ENCODE measurements at regions of chr9 and their contacts with region 1.

Region 1: GRCh38 chr9:19934301-19934868 is 145.5 kb upstream of the SLC24A2 start:
- DNase-seq: peak; percentile 26 to 34
- ATAC-seq: peak; percentile 38 to 75 (median 66)
- H3K4me3 ChIP-seq: peak overlapping the region; percentile 15 to 67 (median 56)
- H3K27ac ChIP-seq: peak overlapping the region in 3 of 10 donors; percentile 37 to 62 (median 37)
- H3K4me1 ChIP-seq: peaks cover 0 to 12% (median 0%) of the 10 kb centered on the region in 9 donors
- H3K27me3 ChIP-seq: peaks cover 0 to 8% (median 0%) of the 10 kb centered on the region in 7 donors
- CTCF ChIP-seq: peak in 3 of 9 donors; percentile 14 to 17 (median 16)

Region 2: DNA sequence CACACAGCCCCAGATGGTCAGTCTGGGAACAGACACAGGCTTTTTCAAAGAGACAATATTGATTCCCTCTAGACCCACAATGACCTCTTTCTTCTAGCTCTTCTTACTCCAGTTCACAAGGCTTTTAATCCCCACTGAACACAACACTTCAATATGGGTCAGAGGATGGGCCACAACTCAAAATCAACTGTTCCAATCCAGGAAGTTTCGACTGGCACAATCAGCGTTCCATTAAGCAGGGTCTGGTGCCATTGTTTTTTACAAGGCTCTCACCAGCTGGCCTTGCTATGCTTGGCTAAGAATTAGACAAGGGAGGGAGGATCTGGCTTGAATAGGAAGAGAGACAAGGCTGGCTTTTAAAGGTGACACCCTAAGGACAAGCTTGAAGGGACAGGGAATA is 53.9 kb after region 1 on chr9:
- intact Hi-C with region 1: no loop called
- DNase-seq: no peak
- ATAC-seq: no peak
- H3K4me3 ChIP-seq: no peak overlapping the region
- H3K27ac ChIP-seq: no peak overlapping the region
- H3K4me1 ChIP-seq: no peaks in the 10 kb centered on the region
- H3K27me3 ChIP-seq: no peaks in the 10 kb centered on the region
- CTCF ChIP-seq: no peak

Region 3: GRCh38 chr9:20015427-20015931 is 81.1 kb after region 1 on chr9:
- intact Hi-C with region 1: loop called in 1 of 10 experiments (anchors 10 kb)
- DNase-seq: no peak
- ATAC-seq: peak in 4 of 8 donors; percentile 17 to 50 (median 30)
- H3K4me3 ChIP-seq: no peak overlapping the region
- H3K27ac ChIP-seq: peak overlapping the region in 3 of 10 donors; percentile 20 to 47 (median 23)
- H3K4me1 ChIP-seq: peaks cover 0 to 11% (median 0%) of the 10 kb centered on the region in 9 donors
- H3K27me3 ChIP-seq: no peaks in the 10 kb centered on the region
- CTCF ChIP-seq: no peak

Region 4: DNA sequence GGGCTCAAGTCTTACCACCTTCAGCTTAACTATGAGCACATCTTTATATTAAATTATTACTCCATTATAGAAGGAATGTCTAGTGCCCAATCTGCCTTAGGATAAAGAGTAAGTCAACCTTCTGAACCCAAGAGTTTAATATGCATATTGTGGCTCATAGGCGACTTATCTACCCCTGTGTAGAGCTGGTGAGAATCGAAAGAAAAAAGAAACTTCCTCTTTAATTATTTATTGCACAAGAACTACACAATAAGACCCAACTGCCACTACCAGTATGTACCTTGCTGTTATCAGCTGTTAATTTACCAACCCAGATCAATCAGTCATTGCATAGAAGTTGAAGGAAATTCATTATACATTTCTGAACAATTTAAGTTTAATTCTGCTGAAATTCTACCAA is 183.6 kb after region 1 on chr9:
- intact Hi-C with region 1: no loop called
- DNase-seq: no peak
- ATAC-seq: no peak
- H3K4me3 ChIP-seq: no peak overlapping the region
- H3K27ac ChIP-seq: no peak overlapping the region
- H3K4me1 ChIP-seq: no peaks in the 10 kb centered on the region
- H3K27me3 ChIP-seq: no peaks in the 10 kb centered on the region
- CTCF ChIP-seq: no peak

Region 5: GRCh38 chr9:20292002-20292401 is 357.6 kb after region 1 on chr9:
- intact Hi-C with region 1: loop called in 2 of 10 experiments (anchors 10 kb)
- DNase-seq: no peak
- ATAC-seq: no peak
- H3K4me3 ChIP-seq: no peak overlapping the region
- H3K27ac ChIP-seq: no peak overlapping the region
- H3K4me1 ChIP-seq: peaks cover 0 to 6% (median 0%) of the 10 kb centered on the region in 9 donors
- H3K27me3 ChIP-seq: no peaks in the 10 kb centered on the region
- CTCF ChIP-seq: no peak

Region 6: DNA sequence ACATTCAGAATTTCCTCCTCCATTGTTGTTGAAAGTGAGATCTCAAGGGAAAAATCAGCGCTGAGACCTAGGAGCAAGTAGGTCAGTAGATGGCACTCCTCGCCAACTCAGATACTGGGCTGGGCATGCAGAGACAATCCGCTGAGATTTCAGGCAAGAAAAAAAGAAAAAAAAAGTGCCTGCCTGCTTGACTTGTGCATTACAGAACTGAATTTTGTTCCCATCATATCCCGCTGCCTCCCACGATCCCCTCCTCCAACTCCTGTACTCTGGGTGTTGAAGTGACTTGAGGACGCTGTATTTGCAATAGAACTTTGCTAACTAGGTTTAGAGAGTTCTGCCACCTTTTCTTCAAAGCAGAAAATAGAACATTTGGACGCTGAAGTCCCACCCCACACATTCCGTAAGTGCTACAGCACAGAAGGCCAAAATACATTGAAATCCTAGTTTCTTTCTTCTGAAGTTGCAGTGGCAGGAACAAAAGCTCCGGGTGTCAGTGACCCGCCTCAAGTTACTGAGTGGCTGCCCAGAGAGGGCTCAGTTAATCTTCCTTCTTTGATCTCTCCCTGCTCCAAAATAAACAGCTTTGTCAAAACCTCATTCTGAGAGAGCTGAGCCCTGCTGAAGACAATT is 422.1 kb after region 1 on chr9:
- intact Hi-C with region 1: loop called in 9 of 10 experiments (anchors 5 to 10 kb)
- DNase-seq: peak; percentile 46 to 79
- ATAC-seq: peak; percentile 77 to 95 (median 91)
- H3K4me3 ChIP-seq: peak overlapping the region in 7 of 10 donors; percentile 0 to 42 (median 33)
- H3K27ac ChIP-seq: peak overlapping the region in 9 of 10 donors; percentile 1 to 76 (median 55)
- H3K4me1 ChIP-seq: peaks cover 0 to 38% (median 17%) of the 10 kb centered on the region in 9 donors
- H3K27me3 ChIP-seq: no peaks in the 10 kb centered on the region
- CTCF ChIP-seq: peak; percentile 55 to 87 (median 69)

Region 7: DNA sequence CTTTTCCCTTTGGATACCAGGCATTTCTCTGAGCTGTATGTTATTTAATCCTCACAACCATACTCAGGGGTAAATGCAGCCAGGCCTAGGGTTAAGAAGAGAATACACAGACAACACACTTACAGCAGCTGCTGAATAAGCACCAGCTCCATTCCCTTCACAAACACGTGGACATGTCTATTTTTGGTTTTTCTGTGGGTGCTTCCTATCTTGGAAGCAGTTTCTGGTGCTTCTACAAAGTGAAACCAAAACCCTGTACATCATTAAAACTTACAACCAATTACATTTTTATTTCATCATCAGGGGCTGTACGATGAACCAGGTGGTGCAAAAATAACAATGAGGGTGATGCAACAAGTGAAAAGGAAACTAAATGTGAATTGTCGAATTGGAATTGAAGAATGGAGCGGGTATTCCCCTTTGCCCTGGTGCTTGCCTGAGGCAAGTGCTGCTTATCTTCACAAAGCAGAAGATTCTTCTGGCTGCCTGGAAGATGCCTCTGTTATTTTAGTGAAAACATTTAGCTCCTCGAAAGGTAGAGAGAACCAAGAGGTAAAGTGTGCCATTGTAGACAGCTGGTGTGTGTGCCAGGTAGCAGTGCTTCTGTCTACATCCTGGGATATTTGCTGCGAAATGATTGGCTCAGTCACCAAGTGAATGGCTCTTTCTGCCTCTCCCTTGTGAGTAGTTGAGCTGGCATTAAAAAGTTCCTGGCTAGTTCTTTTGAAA is 1162.0 kb after region 1 on chr9:
- intact Hi-C with region 1: loop called in 1 of 10 experiments (anchors 10 kb)
- DNase-seq: no peak
- ATAC-seq: peak; percentile 68 to 90 (median 82)
- H3K4me3 ChIP-seq: peak overlapping the region in 9 of 10 donors; percentile 12 to 41 (median 32)
- H3K27ac ChIP-seq: peak overlapping the region in 9 of 10 donors; percentile 30 to 76 (median 58)
- H3K4me1 ChIP-seq: peaks cover 0 to 34% (median 18%) of the 10 kb centered on the region in 9 donors
- H3K27me3 ChIP-seq: no peaks in the 10 kb centered on the region
- CTCF ChIP-seq: no peak

Region 8: DNA sequence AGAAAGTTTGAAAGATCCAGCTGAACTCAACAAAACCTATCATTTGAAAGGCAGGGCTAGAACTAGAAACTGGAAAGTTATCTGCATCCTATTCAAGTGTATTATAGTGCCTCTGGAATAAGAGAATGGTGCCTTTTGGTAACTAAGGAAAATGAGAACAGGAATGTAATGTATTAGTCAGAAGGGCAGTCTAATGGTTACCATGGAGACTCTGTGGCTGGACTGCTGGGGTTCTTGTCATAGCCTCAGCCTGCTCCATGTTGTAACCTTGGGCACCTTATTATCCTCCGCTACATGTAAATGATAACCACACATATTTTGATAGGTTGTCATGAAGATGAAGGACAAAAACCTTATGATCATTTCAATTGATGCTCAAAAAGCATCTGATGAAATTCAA is 1167.9 kb after region 1 on chr9:
- intact Hi-C with region 1: loop called in 2 of 10 experiments (anchors 5 to 10 kb)
- DNase-seq: no peak
- ATAC-seq: no peak
- H3K4me3 ChIP-seq: no peak overlapping the region
- H3K27ac ChIP-seq: no peak overlapping the region
- H3K4me1 ChIP-seq: peaks cover 0 to 22% (median under 1%) of the 10 kb centered on the region in 9 donors
- H3K27me3 ChIP-seq: no peaks in the 10 kb centered on the region
- CTCF ChIP-seq: no peak

Measured in heart right ventricle (tissue), 16 donors.